GM12878 (cell line): ENCODE measurements at regions of chr1 and their contacts with region 1.

Region 1: DNA sequence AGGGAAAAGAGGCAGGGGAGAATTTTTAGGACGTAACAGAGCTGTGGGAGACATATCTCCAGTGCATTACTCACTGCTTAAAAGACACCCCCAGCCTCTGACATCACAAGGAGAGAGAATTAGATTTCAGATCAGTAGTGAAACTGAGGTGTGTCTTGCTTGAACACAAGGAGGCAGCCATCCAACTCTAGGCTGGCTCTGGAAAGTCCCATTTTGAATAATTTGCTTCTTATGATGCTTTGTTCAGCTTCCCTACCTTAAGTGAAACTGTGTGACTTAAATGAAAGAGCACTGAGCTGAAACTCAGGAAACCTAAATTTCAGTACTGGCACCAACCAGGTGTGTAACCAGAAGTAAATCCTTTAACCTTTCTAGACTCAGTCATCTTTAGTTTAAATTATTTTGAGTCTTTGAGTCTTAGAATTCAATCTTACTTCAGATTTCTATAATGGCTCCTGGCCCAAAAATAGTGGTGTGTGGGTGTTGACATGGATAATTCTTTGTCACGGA is 251.6 kb upstream of the SGIP1 start:
- DNase-seq: peak; percentile 98
- ATAC-seq: peak; percentile 75
- H3K4me3 ChIP-seq: peak overlapping the region; percentile 18; the same call in 1 of the 2 replicates
- H3K27ac ChIP-seq: peak overlapping the region; percentile 97
- H3K4me1 ChIP-seq: peaks cover 49% of the 10 kb centered on the region
- H3K27me3 ChIP-seq: no peaks in the 10 kb centered on the region
- CTCF ChIP-seq: peak; percentile 21 to 52 (median 25); a peak in 4 of 6 replicates
- EP300 ChIP-seq: peak; percentile 98 to 99
- POLR2A ChIP-seq: no peak
- RAD21 ChIP-seq: peak; percentile 45; the same call in 1 of the 2 replicates

Region 2: DNA sequence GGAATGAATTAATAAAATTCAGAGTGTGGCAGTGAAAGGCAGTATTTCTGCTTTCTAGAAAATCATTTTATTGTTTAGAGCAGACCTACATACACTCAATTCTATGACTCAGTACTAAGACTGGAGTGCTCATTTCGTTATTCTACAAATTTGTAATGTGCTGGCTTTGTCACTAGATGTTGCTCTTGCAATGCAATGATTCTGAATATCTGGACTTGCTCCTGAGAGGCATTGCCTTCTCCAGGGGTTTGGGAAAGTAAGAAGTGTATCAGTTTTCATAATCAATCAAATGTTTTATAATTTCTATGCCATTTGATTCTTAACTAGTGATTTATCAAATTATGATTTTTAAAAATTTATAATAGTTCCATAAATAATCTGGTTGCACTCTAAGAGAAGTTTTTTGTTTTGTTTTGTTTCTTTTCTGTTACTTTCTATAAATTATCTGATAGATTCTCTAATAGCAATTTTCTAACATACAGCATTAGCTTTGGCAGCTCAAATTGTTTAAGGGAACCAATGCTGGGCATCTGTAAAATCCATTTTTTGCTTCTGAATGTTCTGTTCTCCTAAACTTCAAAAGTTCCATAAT is 29.0 kb before region 1 on chr1:
- CTCF ChIA-PET with region 1: interaction called, 5 read pairs
- POLR2A ChIA-PET with region 1: interaction called, 3 read pairs
- RAD21 ChIA-PET with region 1: interaction called, 8 read pairs
- SMC1A ChIA-PET with region 1: interaction called, 7 read pairs
- in situ Hi-C with region 1: no loop called
- intact Hi-C with region 1: loop called (anchors 1 kb)
- DNase-seq: peak; percentile 55
- ATAC-seq: peak; percentile 90
- H3K4me3 ChIP-seq: no peak overlapping the region
- H3K27ac ChIP-seq: no peak overlapping the region
- H3K4me1 ChIP-seq: peaks cover 1% of the 10 kb centered on the region; the same call in 1 of the 2 replicates
- H3K27me3 ChIP-seq: no peaks in the 10 kb centered on the region
- CTCF ChIP-seq: peak; percentile 75 to 92 (median 81)
- EP300 ChIP-seq: no peak
- POLR2A ChIP-seq: no peak
- RAD21 ChIP-seq: peak; percentile 100

Region 3: DNA sequence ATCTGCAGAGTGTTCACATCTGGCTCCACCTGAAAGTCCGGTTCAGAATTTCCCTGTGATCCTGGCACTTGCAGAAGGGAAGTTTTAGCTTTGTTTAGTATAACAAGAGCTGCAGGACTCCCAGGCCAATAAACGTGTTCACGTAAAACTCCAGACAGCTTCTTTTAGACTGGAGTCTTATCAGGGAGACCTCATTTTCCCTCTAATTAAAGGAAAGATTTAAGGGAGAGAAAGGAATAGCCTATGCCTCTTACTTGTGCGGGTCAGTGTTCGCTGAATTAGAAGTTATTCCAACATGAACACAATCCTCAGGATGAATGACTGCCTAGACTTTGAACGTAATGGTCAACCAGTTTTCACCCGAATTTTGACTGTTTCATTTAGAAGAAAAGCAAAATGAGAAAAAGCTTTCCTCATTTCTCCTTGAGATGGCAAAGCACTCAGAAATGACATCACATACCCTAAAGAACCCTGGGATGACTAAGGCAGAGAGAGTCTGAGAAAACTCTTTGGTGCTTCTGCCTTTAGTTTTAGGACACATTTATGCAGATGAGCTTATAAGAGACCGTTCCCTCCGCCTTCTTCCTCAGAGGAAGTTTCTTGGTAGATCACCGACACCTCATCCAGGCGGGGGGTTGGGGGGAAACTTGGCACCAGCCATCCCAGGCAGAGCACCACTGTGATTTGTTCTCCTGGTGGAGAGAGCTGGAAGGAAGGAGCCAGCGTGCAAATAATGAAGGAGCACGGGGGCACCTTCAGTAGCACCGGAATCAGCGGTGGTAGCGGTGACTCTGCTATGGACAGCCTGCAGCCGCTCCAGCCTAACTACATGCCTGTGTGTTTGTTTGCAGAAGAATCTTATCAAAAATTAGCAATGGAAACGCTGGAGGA is 49.5 kb after region 1 on chr1:
- CTCF ChIA-PET with region 1: interaction called, 12 read pairs
- POLR2A ChIA-PET with region 1: interaction called, 22 read pairs
- RAD21 ChIA-PET with region 1: interaction called, 24 read pairs
- SMC1A ChIA-PET with region 1: interaction called, 290 read pairs
- in situ Hi-C with region 1: loop called (anchors 5 kb)
- intact Hi-C with region 1: loop called (anchors 1 kb)
- DNase-seq: no peak
- ATAC-seq: peak; percentile 13
- H3K4me3 ChIP-seq: peak overlapping the region; percentile 81
- H3K27ac ChIP-seq: peak overlapping the region; percentile 93
- H3K4me1 ChIP-seq: peaks cover 49% of the 10 kb centered on the region
- H3K27me3 ChIP-seq: no peaks in the 10 kb centered on the region
- CTCF ChIP-seq: no peak
- EP300 ChIP-seq: peak in 1 of 2 experiments; percentile 41; a peak in 1 of 4 replicates
- POLR2A ChIP-seq: peak; percentile 48; the same call in 1 of the 2 replicates
- RAD21 ChIP-seq: no peak

Region 4: DNA sequence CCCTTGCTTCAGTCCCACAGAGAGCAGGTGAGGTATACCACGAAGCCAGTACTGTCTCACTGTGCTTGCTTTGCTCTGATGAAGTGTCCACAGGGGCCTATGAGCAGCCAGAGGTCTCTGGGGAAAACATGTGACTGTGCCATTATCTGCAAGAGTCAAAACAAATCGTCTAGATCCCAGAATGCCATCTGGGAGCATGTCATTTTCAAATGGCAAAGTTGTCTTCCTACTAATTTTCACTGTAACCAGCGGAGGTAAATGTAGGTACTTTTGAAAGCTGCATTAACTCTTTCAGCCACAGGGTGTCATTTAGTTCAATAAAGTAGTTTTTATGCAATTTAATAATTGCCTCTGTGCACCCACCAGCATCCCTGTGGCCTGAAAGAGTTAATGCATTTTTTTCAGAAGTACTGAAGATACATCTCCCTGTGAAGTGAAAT is 77.9 kb after region 1 on chr1:
- CTCF ChIA-PET with region 1: interaction called, 11 read pairs
- POLR2A ChIA-PET with region 1: no interaction called
- RAD21 ChIA-PET with region 1: no interaction called
- SMC1A ChIA-PET with region 1: interaction called, 8 read pairs
- in situ Hi-C with region 1: no loop called
- intact Hi-C with region 1: no loop called
- DNase-seq: no peak
- ATAC-seq: peak; percentile 51
- H3K4me3 ChIP-seq: no peak overlapping the region
- H3K27ac ChIP-seq: no peak overlapping the region
- H3K4me1 ChIP-seq: peaks cover 16% of the 10 kb centered on the region
- H3K27me3 ChIP-seq: no peaks in the 10 kb centered on the region
- CTCF ChIP-seq: peak; percentile 30 to 44 (median 37); a peak in 4 of 6 replicates
- EP300 ChIP-seq: no peak
- POLR2A ChIP-seq: no peak
- RAD21 ChIP-seq: peak; percentile 59

Region 5: DNA sequence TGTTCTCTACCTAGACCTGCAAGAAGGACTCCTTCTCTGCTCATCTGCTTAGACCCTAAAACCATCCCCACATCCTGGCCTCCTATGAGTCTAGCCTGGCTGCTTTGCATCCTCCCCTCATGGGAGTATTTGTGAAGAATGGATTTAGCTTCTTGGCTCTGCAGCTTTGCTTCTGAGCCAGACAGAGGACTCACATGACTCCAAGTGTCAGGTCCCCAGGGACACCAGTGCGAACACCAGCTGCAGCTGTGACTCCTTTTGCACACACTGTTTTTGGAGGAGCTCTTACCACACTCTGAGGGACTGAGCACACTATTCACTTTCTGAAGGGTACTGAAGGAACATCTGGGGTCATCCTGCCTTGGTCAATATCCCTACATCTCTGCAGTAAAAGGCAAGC is 119.8 kb after region 1 on chr1:
- CTCF ChIA-PET with region 1: interaction called, 5 read pairs
- POLR2A ChIA-PET with region 1: interaction called, 9 read pairs
- RAD21 ChIA-PET with region 1: interaction called, 23 read pairs
- SMC1A ChIA-PET with region 1: interaction called, 14 read pairs
- in situ Hi-C with region 1: no loop called
- intact Hi-C with region 1: loop called (anchors 1 kb)
- DNase-seq: peak; percentile 87
- ATAC-seq: peak; percentile 76
- H3K4me3 ChIP-seq: no peak overlapping the region
- H3K27ac ChIP-seq: peak overlapping the region; percentile 77
- H3K4me1 ChIP-seq: peaks cover 58% of the 10 kb centered on the region
- H3K27me3 ChIP-seq: no peaks in the 10 kb centered on the region
- CTCF ChIP-seq: no peak
- EP300 ChIP-seq: peak; percentile 88 to 95; a peak in 3 of 4 replicates
- POLR2A ChIP-seq: 0 out of 2 replicates have a peak, but pooled peaks have one; percentile 42
- RAD21 ChIP-seq: no peak

Region 6: GRCh38 chr1:67174716-67175284 is 892.4 kb after region 1 on chr1:
- CTCF ChIA-PET with region 1: no interaction called
- POLR2A ChIA-PET with region 1: no interaction called
- RAD21 ChIA-PET with region 1: no interaction called
- SMC1A ChIA-PET with region 1: no interaction called
- in situ Hi-C with region 1: loop called (anchors 25 kb)
- intact Hi-C with region 1: loop called (anchors 5 kb)
- DNase-seq: no peak
- ATAC-seq: peak; percentile 72
- H3K4me3 ChIP-seq: no peak overlapping the region
- H3K27ac ChIP-seq: no peak overlapping the region
- H3K4me1 ChIP-seq: peaks cover 16% of the 10 kb centered on the region
- H3K27me3 ChIP-seq: no peaks in the 10 kb centered on the region
- CTCF ChIP-seq: no peak
- EP300 ChIP-seq: peak in 1 of 2 experiments; percentile 9; a peak in 1 of 4 replicates
- POLR2A ChIP-seq: no peak
- RAD21 ChIP-seq: no peak